Right lobe of liver (tissue), 6 donors: ENCODE measurements at regions of chr22 and their contacts with region 1.

Region 1: GRCh38 chr22:17785185-17786184 is 11.2 kb upstream of the BID start:
- DNase-seq: peak; percentile 86 to 91 (median 89)
- ATAC-seq: peak; percentile 67 to 79 (median 76)
- H3K4me3 ChIP-seq: no peak overlapping the region
- H3K27ac ChIP-seq: peak overlapping the region in 2 of 3 donors; percentile 30 to 73
- H3K4me1 ChIP-seq: peaks cover 0 to 28% (median 4%) of the 10 kb centered on the region in 4 donors
- H3K27me3 ChIP-seq: no peaks in the 10 kb centered on the region
- CTCF ChIP-seq: peak; percentile 73 to 84 (median 83)
- POLR2A ChIP-seq: no peak

Region 2: DNA sequence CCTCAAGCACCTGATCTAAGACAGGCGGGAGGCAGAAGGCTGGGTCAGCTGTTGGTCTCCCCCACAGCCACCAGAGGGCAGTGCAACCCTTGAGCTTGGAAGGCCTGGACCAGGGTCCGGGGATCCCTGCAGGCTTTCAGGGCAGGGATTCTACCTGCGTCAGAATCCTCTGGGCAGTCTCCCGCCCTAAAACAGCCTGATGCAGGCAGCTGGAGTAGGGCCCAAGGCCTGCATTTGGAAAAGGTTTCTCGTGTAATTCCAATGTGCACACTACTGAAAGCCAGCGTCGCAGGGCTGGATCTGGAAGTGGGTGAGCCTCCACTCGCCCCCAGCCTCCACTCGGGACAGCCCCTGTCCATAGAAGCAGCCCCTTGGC is 43.0 kb before region 1 on chr22:
- intact Hi-C with region 1: loop called (anchors 5 kb)
- DNase-seq: peak; percentile 72 to 87 (median 84)
- ATAC-seq: peak; percentile 86 to 93 (median 90)
- H3K4me3 ChIP-seq: no peak overlapping the region
- H3K27ac ChIP-seq: no peak overlapping the region
- H3K4me1 ChIP-seq: no peaks in the 10 kb centered on the region
- H3K27me3 ChIP-seq: no peaks in the 10 kb centered on the region
- CTCF ChIP-seq: peak; percentile 57 to 79 (median 74)
- POLR2A ChIP-seq: no peak

Region 3: GRCh38 chr22:17972385-17973181 is 187.1 kb after region 1 on chr22:
- intact Hi-C with region 1: no loop called
- DNase-seq: peak in 2 of 3 donors; percentile 54 to 68
- ATAC-seq: peak; percentile 82 to 90 (median 84)
- H3K4me3 ChIP-seq: peak overlapping the region in 2 of 3 donors; percentile 0 to 31
- H3K27ac ChIP-seq: peak overlapping the region; percentile 32 to 80 (median 60)
- H3K4me1 ChIP-seq: peaks cover 0 to 35% (median 20%) of the 10 kb centered on the region in 4 donors
- H3K27me3 ChIP-seq: no peaks in the 10 kb centered on the region
- CTCF ChIP-seq: no peak
- POLR2A ChIP-seq: no peak